ENCODE measurements at regions of chr20 and their contacts with region 1.

Region 1: GRCh38 chr20:18662279-18663040 is 74.6 kb downstream of the DTD1 start:
- DNase-seq: no peak
- ATAC-seq: no peak
- H3K4me3 ChIP-seq: no peak overlapping the region
- H3K27ac ChIP-seq: no peak overlapping the region
- H3K4me1 ChIP-seq: peaks cover 0 to 4% (median 0%) of the 10 kb centered on the region in 9 donors
- H3K27me3 ChIP-seq: no peaks in the 10 kb centered on the region
- CTCF ChIP-seq: no peak

Region 2: GRCh38 chr20:17394411-17394810 is 1268.0 kb before region 1 on chr20:
- intact Hi-C with region 1: loop called in 1 of 10 experiments (anchors 5 kb)
- DNase-seq: no peak
- ATAC-seq: no peak
- H3K4me3 ChIP-seq: no peak overlapping the region
- H3K27ac ChIP-seq: no peak overlapping the region
- H3K4me1 ChIP-seq: no peaks in the 10 kb centered on the region
- H3K27me3 ChIP-seq: peaks cover 0 to 13% (median 0%) of the 10 kb centered on the region in 7 donors
- CTCF ChIP-seq: no peak

Region 3: GRCh38 chr20:18739751-18740166 is 77.3 kb after region 1 on chr20:
- intact Hi-C with region 1: no loop called
- DNase-seq: no peak
- ATAC-seq: peak in 6 of 8 donors; percentile 41 to 77 (median 59)
- H3K4me3 ChIP-seq: peak overlapping the region in 1 of 10 donors; percentile 3
- H3K27ac ChIP-seq: peak overlapping the region in 2 of 10 donors; percentile 25 to 44
- H3K4me1 ChIP-seq: peaks cover 0 to 22% (median 0%) of the 10 kb centered on the region in 9 donors
- H3K27me3 ChIP-seq: no peaks in the 10 kb centered on the region
- CTCF ChIP-seq: no peak

Measured in heart right ventricle (tissue), 16 donors.